ENCODE measurements at regions of chr5 and their contacts with region 1.

Region 1: DNA sequence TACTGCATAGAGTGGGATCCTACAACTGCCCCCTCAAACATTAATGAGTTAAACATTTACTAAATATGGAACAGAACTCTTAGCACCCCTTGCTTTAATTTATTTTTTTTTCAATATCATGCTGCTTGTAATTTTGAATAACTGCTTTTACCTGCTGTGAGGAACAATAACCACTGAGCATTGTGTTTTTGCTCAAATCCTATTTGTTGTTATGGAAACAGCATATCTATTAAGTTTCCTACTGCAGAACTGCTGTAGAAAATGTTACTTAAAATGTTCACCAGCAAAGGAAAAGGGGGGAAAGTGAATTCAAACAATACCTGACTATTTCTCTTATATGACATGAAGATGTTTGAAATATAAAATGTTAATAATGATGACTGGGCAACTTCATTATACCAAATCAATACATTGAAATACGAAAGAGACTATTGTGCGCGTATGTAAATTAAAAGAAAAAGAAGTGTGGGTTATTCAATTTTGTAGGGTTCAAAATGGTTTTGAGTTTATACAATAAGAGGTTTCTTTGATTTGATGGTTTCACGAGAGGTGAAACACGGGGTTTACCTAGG is 1043.8 kb upstream of the NUDT12 start:
- DNase-seq: no peak
- H3K4me3 ChIP-seq: no peak overlapping the region
- H3K27ac ChIP-seq: no peak overlapping the region
- H3K4me1 ChIP-seq: no peaks in the 10 kb centered on the region
- H3K27me3 ChIP-seq: no peaks in the 10 kb centered on the region
- CTCF ChIP-seq: no peak
- POLR2A ChIP-seq: no peak

Region 2: DNA sequence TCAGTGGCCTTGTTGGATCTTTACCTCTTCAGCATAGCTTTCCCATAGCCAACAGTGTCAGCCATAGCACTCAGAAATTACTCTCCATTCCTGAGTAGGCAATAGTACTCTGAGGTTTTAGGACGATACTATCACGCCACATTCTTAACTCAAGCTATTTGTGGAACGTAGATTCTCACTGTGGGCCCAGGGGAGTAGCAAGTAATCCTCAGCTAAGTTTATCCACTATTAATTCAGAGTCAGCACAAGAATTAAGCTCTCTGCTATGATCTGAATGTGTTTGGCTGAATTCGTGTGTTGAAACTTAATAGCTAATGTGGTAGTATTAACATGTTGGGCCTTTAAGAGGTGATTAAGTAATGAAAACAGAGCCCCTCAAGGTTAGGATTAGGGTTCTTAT is 184.9 kb before region 1 on chr5:
- intact Hi-C with region 1: loop called (anchors 5 kb)
- DNase-seq: no peak
- H3K4me3 ChIP-seq: no peak overlapping the region
- H3K27ac ChIP-seq: no peak overlapping the region
- H3K4me1 ChIP-seq: no peaks in the 10 kb centered on the region
- H3K27me3 ChIP-seq: no peaks in the 10 kb centered on the region
- CTCF ChIP-seq: no peak
- POLR2A ChIP-seq: no peak

Region 3: DNA sequence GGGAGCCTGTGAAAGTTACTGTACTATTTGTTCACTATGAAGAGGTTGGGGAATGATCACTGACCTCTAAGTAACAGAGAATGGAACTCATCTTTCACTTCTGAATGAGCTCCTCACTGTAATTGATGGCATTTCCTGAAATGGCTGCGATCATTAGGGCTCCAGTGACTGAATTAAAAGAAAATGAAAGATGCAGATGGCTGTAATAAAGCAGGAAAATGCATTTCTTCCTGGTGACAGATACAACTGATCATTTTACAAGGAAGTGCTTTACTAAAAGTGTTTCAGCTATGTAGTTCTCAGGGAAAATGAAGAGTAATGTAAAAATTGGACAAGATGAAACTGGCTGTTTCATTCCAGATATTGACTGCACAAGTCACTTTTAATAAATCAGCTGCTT is 156.9 kb after region 1 on chr5:
- intact Hi-C with region 1: no loop called
- DNase-seq: no peak
- H3K4me3 ChIP-seq: no peak overlapping the region
- H3K27ac ChIP-seq: no peak overlapping the region
- H3K4me1 ChIP-seq: no peaks in the 10 kb centered on the region
- H3K27me3 ChIP-seq: no peaks in the 10 kb centered on the region
- CTCF ChIP-seq: no peak
- POLR2A ChIP-seq: no peak

Region 4: GRCh38 chr5:106566031-106566430 is 1959.7 kb after region 1 on chr5:
- intact Hi-C with region 1: no loop called
- DNase-seq: no peak
- H3K4me3 ChIP-seq: no peak overlapping the region
- H3K27ac ChIP-seq: no peak overlapping the region
- H3K4me1 ChIP-seq: no peaks in the 10 kb centered on the region
- H3K27me3 ChIP-seq: no peaks in the 10 kb centered on the region
- CTCF ChIP-seq: no peak
- POLR2A ChIP-seq: no peak